ENCODE measurements at regions of chr6 and their contacts with region 1.

Region 1: GRCh38 chr6:168150551-168151320 is 71.7 kb upstream of the FRMD1 start:
- DNase-seq: peak in 1 of 10 donors; percentile 88

Region 2: DNA sequence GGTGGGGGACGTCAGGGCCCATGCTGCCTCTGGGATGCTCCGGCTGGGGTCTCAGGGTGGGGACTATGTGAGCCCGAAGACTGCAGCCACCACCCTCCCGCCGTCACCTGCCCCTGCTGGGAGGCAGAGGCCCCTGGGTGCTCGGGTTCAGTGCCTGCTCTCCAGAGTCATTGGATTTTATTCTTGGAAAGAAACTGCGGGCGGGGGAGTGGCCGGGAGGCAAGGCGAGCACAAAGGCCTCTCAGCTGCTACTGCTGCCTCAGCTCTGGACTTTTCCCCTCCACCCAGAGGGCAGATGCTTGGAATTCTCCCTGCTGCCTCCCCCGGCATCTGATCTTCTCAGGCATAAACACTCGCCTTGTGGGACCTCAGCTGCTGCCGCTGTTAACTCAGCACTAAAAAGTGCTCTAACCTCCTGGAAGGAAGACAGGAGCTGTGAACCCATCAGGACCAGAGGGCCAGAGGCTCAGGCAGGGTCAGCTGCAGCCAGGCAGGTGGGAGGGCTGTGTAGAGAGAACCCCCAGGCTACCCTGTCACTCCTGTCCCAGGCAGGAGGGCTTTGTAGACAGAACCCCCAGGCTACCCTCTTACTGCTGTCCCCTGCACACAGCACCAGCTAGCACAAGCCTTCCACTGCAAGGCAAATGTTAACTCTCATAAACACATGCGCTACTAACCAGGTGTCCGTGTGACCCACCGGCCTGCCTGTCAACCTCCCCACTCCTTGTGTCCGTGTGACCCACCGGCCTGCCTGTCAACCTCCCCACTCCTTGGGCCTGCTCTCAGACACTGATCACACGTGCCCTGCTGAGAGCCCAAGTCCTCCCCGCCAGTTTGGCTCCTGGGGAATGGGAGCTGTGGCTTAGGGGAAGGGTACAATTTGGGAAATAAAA is 62.3 kb before region 1 on chr6:
- intact Hi-C with region 1: no loop called
- DNase-seq: peak in 3 of 10 donors; percentile 20 to 79 (median 78)

Region 3: DNA sequence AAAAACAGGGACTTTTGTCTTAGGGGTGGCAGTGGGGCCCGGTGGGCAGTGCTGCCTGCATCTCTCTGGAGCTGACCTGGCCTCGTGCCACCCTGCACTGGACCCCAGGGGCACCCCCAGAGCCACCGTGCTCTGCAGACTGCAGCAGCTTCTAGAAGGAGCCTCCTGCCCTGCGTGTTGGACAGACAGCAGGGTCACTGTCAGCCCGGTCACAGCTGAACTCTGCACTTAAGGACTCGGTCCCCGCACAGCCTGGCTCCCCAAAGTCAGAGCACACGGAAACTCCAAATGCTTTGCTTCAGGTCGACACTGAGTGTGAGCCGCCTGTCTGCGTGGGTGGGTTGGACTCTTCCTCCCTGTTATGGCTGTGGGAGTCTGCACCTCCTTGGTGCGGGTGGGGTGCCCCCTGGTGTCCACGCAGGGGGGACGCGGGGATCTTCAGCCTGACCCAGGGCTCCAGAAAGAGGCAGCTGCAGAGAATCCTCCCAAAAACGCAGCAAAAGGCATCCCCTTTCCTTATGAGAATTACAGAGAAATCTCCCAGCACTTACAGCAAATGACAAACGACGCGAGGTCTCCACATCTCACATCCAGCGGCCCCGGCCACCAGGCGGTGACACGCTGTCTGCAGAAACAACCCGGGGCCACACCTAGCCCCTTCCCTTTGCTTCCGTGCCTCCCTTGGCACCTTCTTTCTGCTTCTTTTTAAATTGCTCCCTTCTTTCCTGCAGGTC is 205.1 kb after region 1 on chr6:
- intact Hi-C with region 1: loop called (anchors 2 kb)
- DNase-seq: peak in 7 of 10 donors; percentile 47 to 95 (median 62)

Region 4: DNA sequence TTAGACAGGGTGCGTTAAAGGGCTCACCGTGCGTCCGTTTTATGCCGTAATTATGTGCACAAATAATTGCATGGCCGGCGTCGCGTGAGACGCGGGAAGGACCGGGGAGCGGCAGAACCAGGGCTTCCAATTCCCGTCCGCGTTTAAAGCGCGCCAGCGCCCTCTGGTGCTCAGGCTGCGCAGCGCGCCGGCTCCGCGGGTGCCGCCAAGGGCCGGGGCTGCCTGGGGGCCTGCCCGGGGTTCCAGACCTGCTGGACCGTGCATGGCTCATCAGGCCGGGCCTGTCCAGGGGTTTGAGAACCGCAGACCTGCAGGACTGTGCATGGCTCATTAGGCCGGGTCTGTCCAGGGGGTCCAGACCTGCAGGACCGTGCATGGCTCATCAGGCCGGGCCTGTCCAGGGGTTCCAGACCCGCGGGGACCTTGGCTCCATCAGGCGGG is 733.9 kb after region 1 on chr6:
- intact Hi-C with region 1: loop called (anchors 2 kb)
- DNase-seq: peak; percentile 36 to 96 (median 75)